ENCODE measurements at regions of chr12 and their contacts with region 1.

Region 1: GRCh38 chr12:7189398-7190267 is at the start of gene PEX5:
- DNase-seq: peak; percentile 82 to 99 (median 88)

Region 2: DNA sequence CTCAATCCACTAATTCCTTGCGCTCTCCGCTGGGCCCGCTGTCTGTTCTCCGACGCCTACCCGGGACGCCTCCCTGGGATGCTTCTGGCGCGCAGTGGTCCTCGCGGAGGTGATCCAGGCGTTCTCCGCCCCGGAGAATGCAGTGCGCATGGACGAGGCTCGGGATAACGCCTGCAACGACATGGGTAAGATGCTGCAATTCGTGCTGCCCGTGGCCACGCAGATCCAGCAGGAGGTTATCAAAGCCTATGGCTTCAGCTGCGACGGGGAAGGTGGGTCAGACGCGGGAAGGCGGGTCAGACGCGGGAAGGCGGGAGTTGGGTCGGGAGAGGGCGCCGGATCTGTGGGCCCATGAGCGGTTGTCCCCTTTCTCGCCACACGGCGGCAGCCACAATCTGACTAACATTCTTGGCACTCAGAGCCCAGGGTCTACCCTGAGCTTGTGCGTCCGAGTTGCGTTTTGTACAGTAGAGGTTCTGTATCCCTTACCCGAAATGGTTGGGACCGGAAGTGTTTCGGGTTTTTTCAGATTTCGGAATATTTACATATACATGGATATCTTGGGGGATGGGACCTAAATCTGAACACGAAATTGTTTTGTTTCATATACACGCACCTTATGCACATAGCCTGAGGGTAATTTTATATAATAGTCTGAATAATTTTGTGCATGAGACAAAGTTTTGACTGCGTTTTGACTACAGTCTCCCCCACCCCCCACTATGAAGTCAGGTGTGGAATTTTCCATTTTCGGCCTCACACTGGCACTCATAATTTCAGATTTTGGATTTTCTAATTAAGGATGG is 245.0 kb before region 1 on chr12:
- intact Hi-C with region 1: loop called (anchors 2 kb)
- DNase-seq: peak; percentile 87 to 99 (median 93)

Region 3: DNA sequence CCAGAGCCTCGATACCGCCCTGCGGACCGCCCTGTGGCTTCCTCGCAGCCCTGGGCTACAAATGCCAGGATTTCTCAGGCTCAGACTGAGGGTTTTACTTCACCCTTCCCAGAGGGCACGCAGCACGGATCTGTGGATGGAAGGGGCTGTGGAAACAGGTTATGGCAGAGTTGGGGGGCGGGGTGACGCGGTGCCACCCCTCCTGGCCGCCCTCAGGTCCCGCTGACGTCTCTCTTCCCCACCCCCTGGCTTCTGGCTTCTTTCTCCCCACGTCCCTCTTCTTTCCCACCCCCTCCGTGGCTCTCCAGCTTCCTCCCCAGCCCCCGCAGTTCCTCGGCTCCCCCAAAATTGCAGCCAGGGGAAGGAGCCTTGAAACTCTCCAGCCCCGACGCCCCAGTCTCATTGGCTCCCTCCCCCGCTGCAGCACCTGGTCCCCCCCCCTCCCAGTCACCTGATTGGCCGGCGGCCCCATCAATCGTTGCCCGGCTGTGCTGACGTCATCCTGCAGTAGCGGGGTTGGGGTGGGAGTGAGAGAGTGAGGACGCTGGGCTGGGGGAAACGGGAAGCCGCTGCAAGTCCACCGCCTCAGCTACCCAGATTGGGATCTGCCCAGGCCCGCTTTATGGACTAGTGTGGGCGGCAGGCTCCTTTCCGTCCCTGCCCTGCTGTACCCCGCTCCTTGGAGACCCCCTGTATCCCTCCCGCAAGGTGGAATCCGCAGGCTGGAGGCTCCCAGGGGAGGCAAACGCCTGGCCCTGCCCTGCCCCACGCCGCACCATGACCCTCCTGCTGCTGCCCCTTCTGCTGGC is 59.6 kb before region 1 on chr12 and contains the start of gene CLSTN3:
- intact Hi-C with region 1: loop called (anchors 5 kb)
- DNase-seq: peak; percentile 64 to 97 (median 85)

Region 4: DNA sequence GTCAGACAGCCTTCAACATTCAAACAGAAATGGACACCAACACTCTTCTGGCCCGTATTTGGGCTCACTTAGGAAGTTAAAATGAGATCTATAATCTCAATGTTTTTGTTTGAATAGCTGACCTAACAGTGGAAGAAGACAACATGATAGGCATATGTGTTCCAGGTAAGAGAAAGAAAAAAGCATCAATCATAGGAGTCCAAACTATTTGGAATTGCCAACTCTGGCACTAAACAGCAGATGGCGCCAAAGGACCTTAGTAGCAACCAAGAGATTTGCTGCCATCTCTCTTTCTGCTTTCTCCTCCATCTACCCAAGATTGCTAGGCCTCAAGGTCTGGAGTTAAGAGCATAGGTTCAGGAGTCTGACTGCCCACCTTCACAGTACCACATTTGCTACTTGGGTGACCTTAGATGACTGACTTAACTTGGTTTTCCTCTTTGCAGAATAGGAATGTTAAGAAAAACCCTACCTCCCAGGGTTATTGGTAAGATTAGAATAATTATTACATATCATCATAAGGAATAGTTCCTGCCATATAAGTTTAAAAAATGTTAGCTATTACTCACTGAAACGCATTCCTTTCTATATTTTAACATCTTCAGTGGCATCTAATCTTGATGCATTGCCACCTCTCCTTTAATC is 30.1 kb after region 1 on chr12:
- intact Hi-C with region 1: no loop called
- DNase-seq: peak in 8 of 10 donors; percentile 40 to 90 (median 70)